Right cardiac atrium (tissue), 5 donors: ENCODE measurements at regions of chr6 and their contacts with region 1.

Region 1: GRCh38 chr6:109059571-109060021 is 35.0 kb downstream of the SESN1 start:
- DNase-seq: no peak
- ATAC-seq: peak; percentile 75 to 88
- H3K4me3 ChIP-seq: no peak overlapping the region
- H3K27ac ChIP-seq: no peak overlapping the region
- H3K4me1 ChIP-seq: peaks cover 16% of the 10 kb centered on the region
- H3K27me3 ChIP-seq: no peaks in the 10 kb centered on the region

Region 2: GRCh38 chr6:108904741-108905140 is 154.9 kb before region 1 on chr6:
- intact Hi-C with region 1: loop called in 1 of 4 experiments (anchors 10 kb)
- DNase-seq: no peak
- ATAC-seq: no peak
- H3K4me3 ChIP-seq: no peak overlapping the region
- H3K27ac ChIP-seq: no peak overlapping the region
- H3K4me1 ChIP-seq: peaks cover 3% of the 10 kb centered on the region
- H3K27me3 ChIP-seq: no peaks in the 10 kb centered on the region